ENCODE measurements at regions of chr1 and their contacts with region 1.

Region 1: DNA sequence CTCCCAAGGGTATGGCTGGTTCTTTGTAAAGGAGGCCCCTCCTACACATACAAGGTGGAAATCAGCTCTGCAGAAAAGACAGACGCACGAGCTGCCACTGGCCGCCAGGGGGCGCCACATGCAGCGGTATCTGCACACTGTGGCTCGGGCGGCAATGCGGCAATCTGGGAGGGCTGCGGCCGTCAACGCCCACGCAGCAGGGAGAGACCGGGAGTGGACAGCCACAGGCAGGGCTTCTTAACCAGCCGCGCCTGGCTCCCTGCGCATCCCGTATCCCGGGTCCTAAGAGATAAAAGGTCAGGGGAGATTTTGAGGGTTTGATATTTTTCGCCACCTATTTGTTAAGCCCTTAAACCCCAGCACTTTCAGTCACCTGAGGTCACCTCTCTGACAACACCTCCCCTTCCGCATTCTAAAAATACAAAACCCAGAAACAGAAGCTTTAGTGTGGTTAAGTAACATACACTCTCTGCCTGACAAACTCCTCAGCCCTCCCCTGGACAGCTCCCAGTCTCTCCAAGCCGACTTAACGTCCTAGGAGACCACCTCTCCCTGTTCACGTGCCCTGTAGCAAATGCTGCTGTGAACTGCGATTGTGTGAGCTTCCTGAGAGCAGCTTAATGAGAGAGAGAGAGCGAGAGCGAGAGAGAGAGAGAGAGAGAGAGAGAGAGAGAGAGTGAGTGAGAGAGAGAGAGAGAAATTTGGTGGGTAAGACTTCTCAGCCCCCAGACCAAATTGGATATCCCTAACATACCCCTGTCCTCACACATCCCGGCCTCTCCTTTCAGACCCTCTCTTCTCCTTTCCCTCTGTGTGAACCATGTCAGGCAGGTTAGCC is 13.5 kb upstream of the KCNA2 start:
- DNase-seq: peak; percentile 24
- ATAC-seq: peak; percentile 90
- H3K4me3 ChIP-seq: peak overlapping the region in 1 of 2 experiments; percentile 8; a peak in 1 of 4 replicates
- H3K27ac ChIP-seq: no peak overlapping the region
- H3K4me1 ChIP-seq: 0 out of 2 replicates have a peak, but pooled peaks cover 4% of the 10 kb centered on the region
- H3K27me3 ChIP-seq: peaks cover 20% of the 10 kb centered on the region
- CTCF ChIP-seq: peak; percentile 91

Region 2: DNA sequence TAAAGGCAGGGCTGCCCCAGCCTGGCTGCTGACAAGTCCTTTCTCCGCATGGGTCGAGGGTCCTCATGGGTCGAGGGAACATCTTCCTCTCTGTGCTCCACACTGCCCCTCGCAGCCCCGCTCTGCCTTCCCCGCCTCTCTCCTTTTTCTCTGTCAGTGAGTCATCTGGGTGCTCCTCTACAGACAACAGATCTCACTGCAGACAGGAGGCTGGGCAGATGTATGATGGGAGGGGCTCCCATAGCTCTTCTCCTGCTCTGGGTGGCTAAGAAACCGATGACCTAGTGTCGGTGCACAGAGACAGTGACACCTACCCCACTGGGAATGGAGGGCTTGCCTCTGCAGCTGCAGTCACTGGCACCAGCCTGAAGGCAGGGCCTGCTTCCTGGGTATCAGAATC is 106.1 kb before region 1 on chr1:
- CTCF ChIA-PET with region 1: no interaction called
- POLR2A ChIA-PET with region 1: interaction called, 14 read pairs
- in situ Hi-C with region 1: no loop called
- intact Hi-C with region 1: no loop called
- DNase-seq: no peak
- ATAC-seq: no peak
- H3K4me3 ChIP-seq: no peak overlapping the region
- H3K27ac ChIP-seq: no peak overlapping the region
- H3K4me1 ChIP-seq: no peaks in the 10 kb centered on the region
- H3K27me3 ChIP-seq: no peaks in the 10 kb centered on the region
- CTCF ChIP-seq: no peak

Region 3: GRCh38 chr1:110524311-110525251 is 95.0 kb before region 1 on chr1:
- CTCF ChIA-PET with region 1: interaction called, 5 read pairs
- POLR2A ChIA-PET with region 1: no interaction called
- in situ Hi-C with region 1: no loop called
- intact Hi-C with region 1: loop called (anchors 2 kb)
- DNase-seq: peak; percentile 20
- ATAC-seq: peak; percentile 81
- H3K4me3 ChIP-seq: no peak overlapping the region
- H3K27ac ChIP-seq: no peak overlapping the region
- H3K4me1 ChIP-seq: no peaks in the 10 kb centered on the region
- H3K27me3 ChIP-seq: no peaks in the 10 kb centered on the region; the same call in 1 of the 2 replicates
- CTCF ChIP-seq: peak; percentile 83

Region 4: GRCh38 chr1:110554871-110555801 is 64.5 kb before region 1 on chr1:
- CTCF ChIA-PET with region 1: interaction called, 5 read pairs
- POLR2A ChIA-PET with region 1: no interaction called
- in situ Hi-C with region 1: no loop called
- intact Hi-C with region 1: loop called (anchors 5 kb)
- DNase-seq: no peak
- ATAC-seq: peak; percentile 89
- H3K4me3 ChIP-seq: peak overlapping the region; percentile 6 to 26; a peak in 2 of 4 replicates
- H3K27ac ChIP-seq: no peak overlapping the region
- H3K4me1 ChIP-seq: no peaks in the 10 kb centered on the region
- H3K27me3 ChIP-seq: peaks cover 5% of the 10 kb centered on the region; the same call in 1 of the 2 replicates
- CTCF ChIP-seq: peak; percentile 79

Region 5: DNA sequence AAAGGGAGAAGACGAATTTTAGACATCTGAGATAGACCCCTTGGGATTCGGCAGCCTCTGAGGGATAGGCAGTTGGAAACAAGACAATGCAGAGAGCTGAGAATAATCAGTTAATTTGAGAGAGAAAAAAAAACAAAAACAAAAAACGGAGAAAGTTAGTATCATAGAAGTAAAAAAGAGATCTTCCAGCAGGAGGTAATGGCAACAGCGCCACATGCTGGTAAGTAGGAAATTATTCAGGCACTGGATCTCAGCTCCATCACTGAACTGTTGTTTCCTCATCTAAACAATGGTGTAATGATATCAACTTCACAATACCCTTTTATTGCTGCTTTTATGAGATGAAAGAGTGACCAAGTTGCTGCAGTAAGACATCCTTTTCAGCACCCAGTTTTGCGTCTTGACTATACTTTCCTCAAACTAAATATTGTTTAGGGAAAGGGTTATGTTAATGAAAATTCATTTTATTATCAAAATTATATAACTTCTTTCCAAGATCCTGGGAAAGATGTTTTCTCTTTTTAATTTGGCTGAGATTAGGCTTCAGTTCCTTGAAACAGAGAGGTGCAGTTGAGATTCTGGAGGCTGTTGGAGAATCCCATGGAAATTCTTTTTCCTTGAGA is 146.5 kb after region 1 on chr1:
- CTCF ChIA-PET with region 1: interaction called, 11 read pairs
- POLR2A ChIA-PET with region 1: no interaction called
- in situ Hi-C with region 1: no loop called
- intact Hi-C with region 1: no loop called
- DNase-seq: no peak
- ATAC-seq: no peak
- H3K4me3 ChIP-seq: no peak overlapping the region
- H3K27ac ChIP-seq: no peak overlapping the region
- H3K4me1 ChIP-seq: no peaks in the 10 kb centered on the region
- H3K27me3 ChIP-seq: peaks cover 4% of the 10 kb centered on the region; the same call in 1 of the 2 replicates
- CTCF ChIP-seq: peak; percentile 72

Region 6: GRCh38 chr1:110780600-110781484 is 161.2 kb after region 1 on chr1:
- CTCF ChIA-PET with region 1: interaction called, 3 read pairs
- POLR2A ChIA-PET with region 1: no interaction called
- in situ Hi-C with region 1: no loop called
- intact Hi-C with region 1: loop called (anchors 5 kb)
- DNase-seq: no peak
- ATAC-seq: peak; percentile 56; the same call in 1 of the 2 replicates
- H3K4me3 ChIP-seq: no peak overlapping the region
- H3K27ac ChIP-seq: no peak overlapping the region
- H3K4me1 ChIP-seq: no peaks in the 10 kb centered on the region
- H3K27me3 ChIP-seq: no peaks in the 10 kb centered on the region
- CTCF ChIP-seq: peak; percentile 78

Measured in Panc1 (cell line).